ENCODE measurements at regions of chr14 and their contacts with region 1.

Region 1: GRCh38 chr14:21014761-21015190 is 10.1 kb downstream of the NDRG2 start:
- DNase-seq: peak; percentile 85
- H3K4me3 Mint-ChIP-seq: no peak overlapping the region
- H3K27ac Mint-ChIP-seq: no peak overlapping the region
- H3K4me1 Mint-ChIP-seq: no peaks in the 10 kb centered on the region
- H3K27me3 Mint-ChIP-seq: peaks cover 38% of the 10 kb centered on the region
- CTCF ChIP-seq: peak; percentile 73

Region 2: GRCh38 chr14:20873370-20874177 is 141.2 kb before region 1 on chr14:
- CTCF ChIA-PET with region 1: no interaction called
- intact Hi-C with region 1: no loop called
- DNase-seq: peak; percentile 67
- H3K4me3 Mint-ChIP-seq: no peak overlapping the region
- H3K27ac Mint-ChIP-seq: no peak overlapping the region
- H3K4me1 Mint-ChIP-seq: no peaks in the 10 kb centered on the region
- H3K27me3 Mint-ChIP-seq: peaks cover 65% of the 10 kb centered on the region
- CTCF ChIP-seq: peak; percentile 39

Region 3: GRCh38 chr14:20904393-20905029 is 110.3 kb before region 1 on chr14:
- CTCF ChIA-PET with region 1: no interaction called
- intact Hi-C with region 1: no loop called
- DNase-seq: no peak
- H3K4me3 Mint-ChIP-seq: no peak overlapping the region
- H3K27ac Mint-ChIP-seq: no peak overlapping the region
- H3K4me1 Mint-ChIP-seq: no peaks in the 10 kb centered on the region
- H3K27me3 Mint-ChIP-seq: peaks cover 44% of the 10 kb centered on the region
- CTCF ChIP-seq: no peak

Region 4: DNA sequence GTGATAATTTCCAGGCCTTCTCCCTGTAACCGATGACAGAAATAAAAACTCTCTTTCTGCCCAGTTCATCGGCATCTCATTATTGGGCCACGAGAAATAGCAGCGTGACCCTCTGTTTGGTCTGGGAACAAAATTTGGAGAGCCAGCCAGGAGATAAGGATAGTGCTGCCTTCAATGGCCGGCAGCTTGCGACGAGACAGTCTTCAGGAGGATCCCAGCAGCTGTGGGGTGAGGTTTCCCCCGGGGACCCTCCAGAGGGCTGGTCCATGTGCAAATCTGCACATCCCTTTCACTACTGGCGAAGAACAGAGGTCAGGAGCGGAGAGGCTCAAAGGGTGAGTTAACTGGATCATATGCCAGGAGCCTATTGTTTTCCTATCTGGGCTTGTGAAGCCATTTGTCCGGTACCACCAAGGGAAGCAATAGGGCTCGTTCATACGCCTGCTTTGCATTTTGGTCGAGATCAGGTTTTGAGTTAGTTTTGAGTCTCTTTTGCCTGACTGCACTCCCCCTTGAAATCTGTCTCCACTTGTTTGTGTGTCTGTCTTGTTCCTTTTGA is 10.9 kb before region 1 on chr14:
- CTCF ChIA-PET with region 1: interaction called, 15 read pairs
- intact Hi-C with region 1: no loop called
- DNase-seq: no peak
- H3K4me3 Mint-ChIP-seq: no peak overlapping the region
- H3K27ac Mint-ChIP-seq: no peak overlapping the region
- H3K4me1 Mint-ChIP-seq: peaks cover 4% of the 10 kb centered on the region
- H3K27me3 Mint-ChIP-seq: no peaks in the 10 kb centered on the region
- CTCF ChIP-seq: no peak

Region 5: DNA sequence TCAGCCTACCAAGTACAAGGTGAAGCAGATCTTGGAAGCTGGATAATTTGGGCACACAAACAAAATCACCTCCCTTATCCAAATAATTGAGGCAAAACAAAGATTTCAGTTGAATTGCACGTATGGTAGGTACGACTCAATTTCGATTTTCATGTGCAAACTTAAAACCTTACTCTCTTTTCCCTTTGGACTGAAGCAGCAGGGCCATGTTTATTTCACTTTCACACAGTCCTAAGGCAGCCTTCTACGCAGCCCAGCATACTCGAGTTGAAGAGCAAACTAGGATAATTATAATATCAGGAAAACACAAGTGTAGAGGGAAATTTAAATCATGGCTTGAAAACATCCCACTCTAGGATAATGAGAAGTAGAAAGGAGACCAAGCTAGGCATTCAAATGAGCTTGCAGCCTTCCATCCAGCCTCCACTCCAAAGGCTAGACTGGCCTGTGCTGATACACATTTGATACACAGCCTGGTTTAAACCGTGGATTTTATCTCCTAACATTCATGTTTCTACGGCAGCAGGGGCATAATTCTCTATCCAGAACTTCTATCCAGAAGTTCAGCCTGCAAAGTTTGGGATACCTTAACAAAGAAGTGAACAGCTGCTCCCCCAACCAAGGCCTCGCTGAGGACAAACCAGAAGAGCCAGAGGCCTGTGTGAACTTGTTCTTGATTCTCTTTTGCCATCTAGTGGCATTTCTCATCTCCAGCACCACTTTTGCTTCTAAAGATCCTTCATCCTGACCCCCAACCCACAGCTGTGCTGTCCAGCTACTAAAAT is 25.0 kb after region 1 on chr14:
- CTCF ChIA-PET with region 1: interaction called, 93 read pairs
- intact Hi-C with region 1: loop called (anchors 1 kb)
- DNase-seq: peak; percentile 37
- H3K4me3 Mint-ChIP-seq: no peak overlapping the region
- H3K27ac Mint-ChIP-seq: no peak overlapping the region
- H3K4me1 Mint-ChIP-seq: peaks cover 36% of the 10 kb centered on the region
- H3K27me3 Mint-ChIP-seq: peaks cover 70% of the 10 kb centered on the region
- CTCF ChIP-seq: peak; percentile 44

Region 6: GRCh38 chr14:21083565-21084325 is 69.0 kb after region 1 on chr14:
- CTCF ChIA-PET with region 1: interaction called, 12 read pairs
- intact Hi-C with region 1: no loop called
- DNase-seq: no peak
- H3K4me3 Mint-ChIP-seq: no peak overlapping the region
- H3K27ac Mint-ChIP-seq: no peak overlapping the region
- H3K4me1 Mint-ChIP-seq: peaks cover 3% of the 10 kb centered on the region
- H3K27me3 Mint-ChIP-seq: no peaks in the 10 kb centered on the region
- CTCF ChIP-seq: no peak

Region 7: GRCh38 chr14:21097636-21098075 is 82.9 kb after region 1 on chr14:
- CTCF ChIA-PET with region 1: interaction called, 18 read pairs
- intact Hi-C with region 1: loop called (anchors 2 kb)
- DNase-seq: no peak
- H3K4me3 Mint-ChIP-seq: peak overlapping the region; percentile 56
- H3K27ac Mint-ChIP-seq: no peak overlapping the region
- H3K4me1 Mint-ChIP-seq: peaks cover 28% of the 10 kb centered on the region
- H3K27me3 Mint-ChIP-seq: no peaks in the 10 kb centered on the region
- CTCF ChIP-seq: no peak

Measured in Calu3 (cell line).